ENCODE measurements at regions of chr2 and their contacts with region 1.

Region 1: GRCh38 chr2:96164459-96165184 is 19.4 kb upstream of the DUSP2 start:
- DNase-seq: no peak
- ATAC-seq: no peak
- H3K4me3 ChIP-seq: no peak overlapping the region
- H3K27ac ChIP-seq: no peak overlapping the region
- H3K4me1 ChIP-seq: no peaks in the 10 kb centered on the region
- H3K27me3 ChIP-seq: no peaks in the 10 kb centered on the region
- CTCF ChIP-seq: no peak

Region 2: DNA sequence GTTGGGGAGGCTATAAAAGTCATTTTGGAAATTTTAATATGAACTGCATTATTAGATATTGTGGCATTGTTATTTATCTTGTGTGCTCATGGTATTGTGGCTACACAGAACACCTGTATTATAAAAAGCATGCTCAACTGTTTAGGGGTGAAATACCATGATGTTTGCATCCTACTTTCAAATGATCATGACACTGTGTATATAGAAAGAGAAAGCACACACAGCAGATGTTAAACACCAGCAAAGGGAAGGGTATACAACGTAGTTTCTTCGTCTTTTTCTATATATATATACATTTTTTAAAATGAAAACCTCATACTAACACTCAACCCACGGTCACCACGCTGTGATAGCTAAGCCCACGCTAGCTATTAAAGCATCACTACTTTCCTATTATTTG is 16.9 kb after region 1 on chr2:
- intact Hi-C with region 1: loop called in 1 of 2 experiments (anchors 1 kb)
- DNase-seq: no peak
- ATAC-seq: no peak
- H3K4me3 ChIP-seq: no peak overlapping the region
- H3K27ac ChIP-seq: no peak overlapping the region
- H3K4me1 ChIP-seq: peaks cover 25% of the 10 kb centered on the region
- H3K27me3 ChIP-seq: no peaks in the 10 kb centered on the region
- CTCF ChIP-seq: no peak

Region 3: GRCh38 chr2:97011977-97012565 is 847.4 kb after region 1 on chr2:
- intact Hi-C with region 1: no loop called
- DNase-seq: no peak
- ATAC-seq: no peak
- H3K4me3 ChIP-seq: no peak overlapping the region
- H3K27ac ChIP-seq: no peak overlapping the region
- H3K4me1 ChIP-seq: no peaks in the 10 kb centered on the region
- H3K27me3 ChIP-seq: no peaks in the 10 kb centered on the region
- CTCF ChIP-seq: peak; percentile 33